ENCODE measurements at regions of chr18 and their contacts with region 1.

Region 1: DNA sequence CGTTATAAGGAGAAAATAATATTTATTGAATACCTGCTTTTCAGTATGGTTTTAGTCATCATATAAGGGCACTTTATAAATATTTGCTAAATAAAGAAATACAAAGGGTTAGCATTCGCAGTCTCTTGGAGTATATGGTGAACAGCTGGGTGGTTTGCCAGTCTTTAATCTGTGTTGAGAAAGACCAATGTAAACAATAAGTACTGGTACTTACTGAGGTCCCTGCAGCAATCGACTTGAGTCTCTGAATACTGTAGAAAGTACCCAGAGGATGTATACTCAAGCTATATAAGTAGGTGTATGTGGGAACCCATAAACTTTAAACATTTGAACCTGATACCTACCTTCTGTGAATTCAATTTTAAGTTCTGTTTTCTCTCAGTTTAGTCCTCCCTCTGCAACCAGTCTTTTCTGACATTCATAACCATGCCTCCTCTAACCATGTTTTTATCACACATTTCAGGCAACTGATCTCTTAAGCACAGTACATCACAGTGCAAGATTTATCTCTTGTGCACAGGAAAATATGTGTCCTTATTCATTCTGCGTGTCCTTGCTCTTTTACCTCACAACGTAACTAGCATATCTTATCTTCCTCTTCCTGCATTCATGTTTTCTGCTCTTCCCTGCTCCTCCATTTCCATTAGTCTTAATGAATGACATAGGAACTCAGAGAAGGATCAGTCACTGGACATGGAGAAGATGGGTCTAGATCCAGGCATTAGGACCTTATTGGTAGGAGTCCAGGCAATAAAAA is 21.7 kb downstream of the C18orf63 start:
- DNase-seq: no peak
- H3K4me3 ChIP-seq: no peak overlapping the region
- H3K27ac ChIP-seq: no peak overlapping the region
- H3K4me1 ChIP-seq: no peaks in the 10 kb centered on the region
- H3K27me3 ChIP-seq: no peaks in the 10 kb centered on the region
- CTCF ChIP-seq: no peak

Region 2: GRCh38 chr18:74006143-74006542 is 331.2 kb before region 1 on chr18:
- CTCF ChIA-PET with region 1: no interaction called
- dilution Hi-C with region 1: no loop called
- in situ Hi-C with region 1: no loop called
- intact Hi-C with region 1: no loop called
- DNase-seq: no peak
- H3K4me3 ChIP-seq: no peak overlapping the region
- H3K27ac ChIP-seq: no peak overlapping the region
- H3K4me1 ChIP-seq: no peaks in the 10 kb centered on the region
- H3K27me3 ChIP-seq: no peaks in the 10 kb centered on the region
- CTCF ChIP-seq: no peak

Region 3: DNA sequence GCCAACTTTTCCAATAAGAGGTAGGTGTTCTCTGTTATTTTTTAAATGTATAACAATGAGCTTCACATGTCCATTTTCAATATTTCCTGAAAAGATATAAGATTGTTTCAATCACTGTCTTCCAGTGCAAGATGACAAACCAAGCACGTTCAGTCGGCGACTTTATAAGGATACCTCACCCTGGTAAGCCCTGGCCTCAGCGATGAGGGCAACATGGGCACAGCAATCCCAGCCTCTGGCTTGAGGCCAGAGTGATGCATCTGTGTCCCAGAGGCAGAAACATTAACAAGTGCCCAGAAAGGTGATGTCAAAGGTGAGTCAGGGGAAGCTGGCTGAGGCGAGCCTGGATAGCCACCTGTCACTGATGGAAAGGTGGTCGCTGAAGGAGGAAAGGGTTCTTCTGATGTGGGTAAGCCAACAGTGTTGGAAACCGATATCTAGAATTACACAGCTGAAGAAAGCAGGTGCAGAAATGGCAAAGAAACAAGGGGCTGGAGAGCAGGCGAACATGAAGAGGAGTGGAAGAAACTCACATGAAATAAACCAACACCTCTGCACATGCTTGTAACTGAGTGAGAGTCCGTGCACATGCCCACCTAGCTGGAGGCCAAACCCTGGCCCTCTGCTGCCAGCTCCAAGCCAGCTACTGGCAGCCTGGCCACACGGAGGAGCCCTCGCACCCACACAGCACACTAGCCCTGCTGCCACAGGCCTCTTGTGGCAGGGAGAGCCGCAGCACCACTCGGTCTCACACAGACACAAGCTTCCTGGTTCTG is 255.2 kb before region 1 on chr18:
- CTCF ChIA-PET with region 1: interaction called, 7 read pairs
- dilution Hi-C with region 1: no loop called
- in situ Hi-C with region 1: no loop called
- intact Hi-C with region 1: loop called (anchors 5 kb)
- DNase-seq: peak; percentile 49
- H3K4me3 ChIP-seq: no peak overlapping the region
- H3K27ac ChIP-seq: no peak overlapping the region
- H3K4me1 ChIP-seq: no peaks in the 10 kb centered on the region
- H3K27me3 ChIP-seq: no peaks in the 10 kb centered on the region
- CTCF ChIP-seq: peak; percentile 59 to 82

Region 4: DNA sequence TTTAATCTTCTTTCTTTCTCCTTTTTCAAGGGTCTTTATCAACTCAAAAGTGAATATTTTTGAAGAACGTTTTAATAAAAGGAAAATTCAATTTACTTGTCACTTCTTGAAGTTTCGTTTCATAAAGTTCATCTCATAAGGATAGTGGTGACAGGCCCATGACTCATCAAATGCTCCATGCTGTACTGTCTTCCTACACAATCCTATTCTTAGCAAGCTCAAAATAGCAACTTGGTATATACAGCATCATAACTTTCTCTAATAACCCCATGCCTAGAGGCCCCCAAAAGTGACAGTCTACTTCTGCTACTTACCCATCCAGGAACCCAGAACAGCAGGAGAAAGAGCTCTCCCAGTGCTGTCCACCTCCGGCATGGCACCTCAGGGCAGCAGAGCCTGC is 197.4 kb before region 1 on chr18:
- CTCF ChIA-PET with region 1: no interaction called
- dilution Hi-C with region 1: no loop called
- in situ Hi-C with region 1: no loop called
- intact Hi-C with region 1: no loop called
- DNase-seq: peak; percentile 61
- H3K4me3 ChIP-seq: no peak overlapping the region
- H3K27ac ChIP-seq: no peak overlapping the region
- H3K4me1 ChIP-seq: peaks cover 31% of the 10 kb centered on the region
- H3K27me3 ChIP-seq: no peaks in the 10 kb centered on the region
- CTCF ChIP-seq: no peak

Region 5: DNA sequence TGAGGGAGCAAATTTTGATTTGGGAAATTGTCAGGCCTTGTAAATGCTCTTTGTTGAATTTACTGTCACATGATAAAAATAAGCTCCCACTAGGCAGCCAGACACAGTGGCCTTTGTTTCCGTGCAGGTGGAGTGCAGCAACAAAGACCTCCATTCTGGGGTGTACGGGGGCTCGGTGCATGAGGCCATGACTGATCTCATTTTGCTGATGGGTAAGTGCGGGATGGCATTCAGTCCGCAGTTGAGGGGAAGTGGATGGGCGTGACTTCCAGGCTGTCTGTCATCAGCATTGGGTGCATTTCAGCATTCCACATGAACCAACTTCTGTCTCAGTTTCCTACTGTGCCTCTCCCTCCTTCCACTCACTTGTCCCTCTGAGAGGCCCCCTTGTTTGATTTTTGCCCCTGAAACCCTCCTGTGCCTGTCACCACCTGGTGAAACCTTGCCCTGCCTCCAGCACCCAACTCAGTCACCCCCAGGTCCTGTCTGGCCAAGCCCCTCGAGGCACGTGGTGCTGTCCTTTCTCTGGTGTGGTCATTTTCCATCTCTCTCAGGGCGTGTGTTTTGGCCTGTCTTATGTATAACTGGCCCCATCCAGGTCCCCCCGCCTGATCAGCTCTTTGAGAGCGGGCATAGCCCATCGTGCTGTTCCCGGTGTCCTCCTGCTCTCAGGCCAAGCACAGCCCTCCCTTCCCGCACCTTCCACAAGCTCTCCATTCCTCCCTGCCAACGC is 175.2 kb after region 1 on chr18:
- CTCF ChIA-PET with region 1: no interaction called
- dilution Hi-C with region 1: no loop called
- in situ Hi-C with region 1: no loop called
- intact Hi-C with region 1: no loop called
- DNase-seq: no peak
- H3K4me3 ChIP-seq: no peak overlapping the region
- H3K27ac ChIP-seq: no peak overlapping the region
- H3K4me1 ChIP-seq: peaks cover 3% of the 10 kb centered on the region
- H3K27me3 ChIP-seq: no peaks in the 10 kb centered on the region
- CTCF ChIP-seq: no peak